HepG2 (cell line): ENCODE measurements at regions of chr22 and their contacts with region 1.

Region 1: GRCh38 chr22:46934746-46935491 is 172.5 kb downstream of the TBC1D22A start:
- DNase-seq: peak; percentile 84
- ATAC-seq: peak; percentile 69
- H3K4me3 ChIP-seq: peak overlapping the region; percentile 44 to 67 (median 47)
- H3K27ac ChIP-seq: peak overlapping the region; percentile 95
- H3K4me1 ChIP-seq: peaks cover 65% of the 10 kb centered on the region
- H3K27me3 ChIP-seq: no peaks in the 10 kb centered on the region
- CTCF ChIP-seq: no peak
- EP300 ChIP-seq: no peak
- POLR2A ChIP-seq: 0 out of 4 replicates have a peak, but pooled peaks of 1 of the 2 experiments have one; percentile 29
- RAD21 ChIP-seq: no peak

Region 2: GRCh38 chr22:46798366-46799350 is 136.3 kb before region 1 on chr22:
- CTCF ChIA-PET with region 1: no interaction called
- POLR2A ChIA-PET with region 1: interaction called, 5 read pairs
- in situ Hi-C with region 1: no loop called
- intact Hi-C with region 1: loop called (anchors 5 kb)
- DNase-seq: peak; percentile 92
- ATAC-seq: peak; percentile 95
- H3K4me3 ChIP-seq: no peak overlapping the region
- H3K27ac ChIP-seq: peak overlapping the region; percentile 56
- H3K4me1 ChIP-seq: peaks cover 57% of the 10 kb centered on the region
- H3K27me3 ChIP-seq: no peaks in the 10 kb centered on the region
- CTCF ChIP-seq: peak; percentile 100
- EP300 ChIP-seq: peak in 1 of 2 experiments; percentile 65; a peak in 2 of 4 replicates
- POLR2A ChIP-seq: no peak
- RAD21 ChIP-seq: peak; percentile 98

Region 3: DNA sequence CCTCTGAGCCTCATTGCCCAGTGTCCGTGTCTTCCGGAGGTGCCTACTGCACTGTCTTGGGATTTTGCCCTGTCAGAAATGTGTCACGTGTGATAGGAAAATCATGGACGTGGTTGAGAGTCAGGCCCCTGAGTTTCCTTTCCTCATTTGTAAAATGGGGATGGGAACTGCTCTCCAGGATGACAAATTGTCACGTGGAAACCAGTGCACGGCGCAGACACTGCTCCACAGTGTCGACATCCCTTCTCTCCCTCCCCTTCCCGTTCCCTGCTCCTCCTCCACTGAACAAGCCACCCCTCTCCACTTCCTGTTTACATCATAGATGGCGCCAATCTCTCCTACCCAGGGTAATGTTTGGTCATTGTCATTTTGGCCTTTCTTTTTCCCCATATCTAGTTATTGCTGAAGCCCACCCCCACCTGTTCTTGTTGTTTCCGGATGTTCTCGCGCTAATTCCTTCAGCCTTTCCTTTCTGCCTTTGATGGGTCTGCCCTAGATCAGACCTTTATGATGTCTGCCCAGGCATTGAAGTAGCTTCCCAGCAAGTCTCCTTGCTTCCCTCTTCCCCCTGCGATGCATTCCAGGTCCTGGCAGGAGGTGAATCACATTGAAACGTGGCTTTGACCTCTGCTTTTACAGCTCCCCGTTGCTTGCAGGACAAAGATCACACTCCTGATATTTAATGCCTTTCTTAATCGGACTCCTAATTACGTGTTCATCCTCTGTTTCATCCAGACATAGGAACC is 80.6 kb before region 1 on chr22:
- CTCF ChIA-PET with region 1: no interaction called
- POLR2A ChIA-PET with region 1: no interaction called
- in situ Hi-C with region 1: no loop called
- intact Hi-C with region 1: no loop called
- DNase-seq: no peak
- ATAC-seq: no peak
- H3K4me3 ChIP-seq: no peak overlapping the region
- H3K27ac ChIP-seq: no peak overlapping the region
- H3K4me1 ChIP-seq: no peaks in the 10 kb centered on the region
- H3K27me3 ChIP-seq: no peaks in the 10 kb centered on the region
- CTCF ChIP-seq: no peak
- EP300 ChIP-seq: no peak
- POLR2A ChIP-seq: no peak
- RAD21 ChIP-seq: no peak

Region 4: GRCh38 chr22:46864314-46865051 is 70.4 kb before region 1 on chr22:
- CTCF ChIA-PET with region 1: no interaction called
- POLR2A ChIA-PET with region 1: interaction called, 3 read pairs
- in situ Hi-C with region 1: no loop called
- intact Hi-C with region 1: loop called (anchors 1 kb)
- DNase-seq: peak; percentile 88
- ATAC-seq: peak; percentile 87
- H3K4me3 ChIP-seq: peak overlapping the region in 2 of 3 experiments; percentile 14 to 43; a peak in 2 of 6 replicates
- H3K27ac ChIP-seq: peak overlapping the region; percentile 66
- H3K4me1 ChIP-seq: peaks cover 50% of the 10 kb centered on the region
- H3K27me3 ChIP-seq: no peaks in the 10 kb centered on the region
- CTCF ChIP-seq: 0 out of 2 replicates have a peak, but pooled peaks have one; percentile 13
- EP300 ChIP-seq: peak in 1 of 2 experiments; percentile 43; a peak in 1 of 4 replicates
- POLR2A ChIP-seq: no peak
- RAD21 ChIP-seq: no peak